ENCODE measurements at regions of chr10 and their contacts with region 1.

Region 1: DNA sequence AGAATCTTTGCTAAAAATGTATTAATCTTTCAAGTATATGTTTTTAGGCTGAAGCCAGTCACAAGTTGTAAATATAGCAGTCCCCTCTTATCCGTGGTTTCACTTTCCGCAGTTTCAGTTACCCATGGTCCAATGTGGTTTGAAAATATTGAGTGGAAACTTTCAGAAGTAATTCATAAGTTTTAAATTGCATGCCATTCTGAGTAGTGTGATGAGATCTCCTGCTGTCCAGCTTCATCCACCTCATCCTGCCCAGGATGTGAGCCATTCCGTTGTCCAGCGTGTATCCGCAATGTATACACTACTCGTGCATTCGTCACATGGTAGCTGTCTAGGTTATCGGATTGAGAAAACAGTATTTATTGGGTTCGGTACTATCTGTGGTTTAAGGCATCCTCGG is 12.2 kb downstream of the PDCD4 start:
- DNase-seq: no peak
- H3K4me3 ChIP-seq: no peak overlapping the region
- H3K27ac ChIP-seq: peak overlapping the region in 1 of 2 donors; percentile 19
- H3K4me1 ChIP-seq: peaks cover 3% of the 10 kb centered on the region
- H3K27me3 ChIP-seq: no peaks in the 10 kb centered on the region
- CTCF ChIP-seq: no peak
- EP300 ChIP-seq: no peak
- POLR2A ChIP-seq: no peak

Region 2: GRCh38 chr10:110765188-110765990 is 118.5 kb before region 1 on chr10:
- intact Hi-C with region 1: no loop called
- DNase-seq: no peak
- H3K4me3 ChIP-seq: no peak overlapping the region
- H3K27ac ChIP-seq: no peak overlapping the region
- H3K4me1 ChIP-seq: no peaks in the 10 kb centered on the region
- H3K27me3 ChIP-seq: no peaks in the 10 kb centered on the region
- CTCF ChIP-seq: no peak
- EP300 ChIP-seq: no peak
- POLR2A ChIP-seq: no peak

Region 3: GRCh38 chr10:110803830-110804338 is 80.0 kb before region 1 on chr10:
- intact Hi-C with region 1: loop called in 3 of 4 experiments (anchors 5 to 10 kb)
- DNase-seq: peak; percentile 64 to 79 (median 72)
- H3K4me3 ChIP-seq: no peak overlapping the region
- H3K27ac ChIP-seq: peak overlapping the region in 1 of 2 donors; percentile 5
- H3K4me1 ChIP-seq: peaks cover 5% of the 10 kb centered on the region
- H3K27me3 ChIP-seq: no peaks in the 10 kb centered on the region
- CTCF ChIP-seq: peak; percentile 62 to 81 (median 70)
- EP300 ChIP-seq: no peak
- POLR2A ChIP-seq: no peak